Heart left ventricle (tissue), 16 donors: ENCODE measurements at regions of chr6 and their contacts with region 1.

Region 1: DNA sequence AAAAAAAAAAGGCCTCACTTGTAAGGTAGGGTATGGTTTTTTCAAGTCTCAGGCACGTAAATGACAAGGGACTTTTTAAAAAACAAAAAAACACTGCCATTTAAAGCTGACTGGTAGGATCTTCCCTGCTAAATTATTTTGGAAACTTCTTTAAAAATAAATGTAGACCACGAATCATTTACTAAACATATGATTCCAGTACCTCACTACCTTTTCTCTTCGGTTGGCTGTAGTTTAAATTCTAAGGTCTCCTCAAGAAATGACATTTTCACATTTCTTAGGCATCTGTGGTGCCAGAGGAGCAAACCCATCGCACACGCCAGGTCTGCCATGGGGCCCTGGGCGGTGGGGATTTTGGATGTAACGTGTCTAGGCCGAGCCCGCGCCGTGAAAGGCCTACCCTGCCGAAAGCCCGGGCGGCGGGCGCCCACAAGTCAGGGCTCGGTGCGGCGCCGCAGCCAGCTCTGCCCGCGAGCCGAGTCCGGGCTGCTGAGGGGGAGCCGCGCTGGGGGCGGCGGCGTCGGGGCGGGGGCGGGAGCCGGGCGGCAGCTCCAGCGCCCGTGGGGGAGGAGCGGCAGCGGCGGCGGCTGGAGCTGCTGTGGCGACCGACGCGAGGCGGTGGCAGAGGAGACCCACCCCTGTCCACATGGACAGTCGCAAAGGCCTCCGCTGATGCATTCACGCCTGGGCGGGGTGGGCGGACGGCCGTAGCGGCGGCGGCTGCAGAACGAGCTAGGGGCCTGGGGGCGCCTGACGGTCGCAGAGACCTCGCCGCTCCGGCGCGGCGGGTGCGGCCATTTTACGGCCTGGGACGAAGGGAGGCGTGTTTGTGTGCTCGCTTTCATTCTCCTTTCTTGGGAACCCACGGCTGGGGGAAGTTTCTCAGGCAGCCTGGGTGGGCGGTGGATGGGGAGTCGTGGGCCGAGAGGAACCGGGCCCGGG is at the start of gene SENP6:
- DNase-seq: peak; percentile 84 to 92 (median 90)
- ATAC-seq: peak; percentile 75 to 97 (median 92)
- H3K4me3 ChIP-seq: peak within 1 kb of the TSS; percentile 71 to 95 (median 87)
- H3K27ac ChIP-seq: peak within 1 kb of the TSS; percentile 83 to 98 (median 96)
- H3K4me1 ChIP-seq: peaks cover 0 to 46% (median 15%) of the 10 kb centered on the region in 12 donors
- H3K27me3 ChIP-seq: no peaks in the 10 kb centered on the region
- CTCF ChIP-seq: peak in 1 of 12 donors; percentile 5
- POLR2A ChIP-seq: peak in 1 of 2 donors; percentile 74
- total RNA-seq, gene SENP6: 49.9 to 71.5 (median 54.4) TPM

Region 2: DNA sequence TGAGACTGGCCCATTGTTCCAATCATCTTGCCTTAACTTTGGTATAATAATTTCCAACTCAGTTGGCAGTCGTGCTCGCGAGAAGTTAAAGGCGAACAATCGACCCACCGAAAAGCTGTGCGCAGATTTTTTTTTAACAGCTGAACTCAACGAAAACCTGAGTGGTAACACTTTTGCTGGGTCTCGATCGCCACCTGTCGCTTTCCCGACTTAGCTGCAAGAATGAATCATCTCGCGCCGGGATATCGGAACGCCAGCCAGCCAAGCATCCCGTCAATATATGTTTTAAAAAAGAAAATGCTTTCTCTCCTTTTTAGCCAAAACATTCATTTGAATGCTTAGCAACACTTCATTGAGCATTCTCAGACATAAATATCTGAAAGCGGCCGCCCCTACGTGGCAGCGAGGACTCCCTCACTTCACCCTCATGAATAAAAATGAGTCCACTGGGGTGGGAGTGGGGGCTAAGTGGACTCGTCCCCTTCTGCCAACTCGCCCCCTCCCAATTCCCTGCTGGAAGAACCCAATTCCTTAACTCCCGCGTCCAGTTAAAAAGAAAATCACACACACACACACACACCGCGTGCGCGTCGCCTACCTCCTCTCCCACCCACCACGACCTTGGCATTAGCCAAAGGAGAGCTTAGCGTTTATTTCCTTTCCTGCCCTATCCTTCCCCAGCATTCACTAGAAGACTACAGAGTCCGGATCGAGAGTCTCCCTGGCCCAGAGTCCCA is 397.2 kb before region 1 on chr6:
- intact Hi-C with region 1: no loop called
- DNase-seq: peak in 4 of 5 donors; percentile 72 to 83 (median 80)
- ATAC-seq: peak in 2 of 4 donors; percentile 14 to 21
- H3K4me3 ChIP-seq: peak overlapping the region; percentile 19 to 72 (median 58)
- H3K27ac ChIP-seq: peak overlapping the region in 11 of 12 donors; percentile 30 to 87 (median 77)
- H3K4me1 ChIP-seq: peaks cover 0 to 62% (median 20%) of the 10 kb centered on the region in 12 donors
- H3K27me3 ChIP-seq: peaks cover 2 to 84% (median 34%) of the 10 kb centered on the region in 9 donors
- CTCF ChIP-seq: peak; percentile 52 to 84 (median 69)
- POLR2A ChIP-seq: no peak

Region 3: DNA sequence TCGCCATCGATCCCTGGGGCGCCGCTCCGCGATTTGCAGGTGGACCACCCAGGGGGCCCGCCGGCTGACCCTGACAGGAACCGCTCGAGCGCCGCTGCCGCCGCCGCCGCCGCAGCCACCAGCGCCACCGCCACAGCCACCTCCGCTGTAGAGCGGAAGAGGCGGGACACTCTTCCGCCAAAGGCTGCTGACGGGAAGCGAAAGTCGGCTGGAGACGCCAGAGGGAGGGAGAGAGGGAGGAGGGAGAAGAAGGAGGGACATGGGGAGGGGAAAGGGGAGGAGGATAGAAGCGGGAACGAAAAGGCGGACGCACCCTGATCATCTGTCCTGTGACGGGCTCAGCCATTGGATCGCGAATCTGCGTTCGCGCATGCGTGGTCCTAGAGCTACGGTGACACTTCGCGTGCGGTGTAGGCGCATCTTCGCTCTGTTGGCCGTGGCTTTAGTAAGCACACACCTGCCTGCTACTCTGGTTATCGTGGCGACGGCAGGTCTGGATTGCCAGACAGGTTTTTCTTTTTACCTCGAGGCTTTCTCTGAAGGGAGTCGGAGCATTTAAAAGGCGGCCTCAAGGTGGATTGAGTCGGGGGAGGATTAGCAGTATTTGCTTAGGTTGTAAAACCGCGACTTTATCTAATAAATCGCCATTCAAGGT is 316.8 kb before region 1 on chr6 and contains the start of gene TMEM30A:
- intact Hi-C with region 1: loop called in 1 of 10 experiments (anchors 10 kb)
- DNase-seq: peak; percentile 97 to 98 (median 98)
- ATAC-seq: peak; percentile 99 to 100 (median 100)
- H3K4me3 ChIP-seq: peak within 1 kb of the TSS; percentile 59 to 92 (median 84)
- H3K27ac ChIP-seq: peak within 1 kb of the TSS; percentile 70 to 95 (median 90)
- H3K4me1 ChIP-seq: peaks cover 7 to 60% (median 38%) of the 10 kb centered on the region in 12 donors
- H3K27me3 ChIP-seq: no peaks in the 10 kb centered on the region
- CTCF ChIP-seq: peak in 3 of 12 donors; percentile 17 to 38 (median 33)
- POLR2A ChIP-seq: peak in 1 of 2 donors; percentile 86
- total RNA-seq, gene TMEM30A: 30.8 to 86.3 (median 58.2) TPM

Region 4: DNA sequence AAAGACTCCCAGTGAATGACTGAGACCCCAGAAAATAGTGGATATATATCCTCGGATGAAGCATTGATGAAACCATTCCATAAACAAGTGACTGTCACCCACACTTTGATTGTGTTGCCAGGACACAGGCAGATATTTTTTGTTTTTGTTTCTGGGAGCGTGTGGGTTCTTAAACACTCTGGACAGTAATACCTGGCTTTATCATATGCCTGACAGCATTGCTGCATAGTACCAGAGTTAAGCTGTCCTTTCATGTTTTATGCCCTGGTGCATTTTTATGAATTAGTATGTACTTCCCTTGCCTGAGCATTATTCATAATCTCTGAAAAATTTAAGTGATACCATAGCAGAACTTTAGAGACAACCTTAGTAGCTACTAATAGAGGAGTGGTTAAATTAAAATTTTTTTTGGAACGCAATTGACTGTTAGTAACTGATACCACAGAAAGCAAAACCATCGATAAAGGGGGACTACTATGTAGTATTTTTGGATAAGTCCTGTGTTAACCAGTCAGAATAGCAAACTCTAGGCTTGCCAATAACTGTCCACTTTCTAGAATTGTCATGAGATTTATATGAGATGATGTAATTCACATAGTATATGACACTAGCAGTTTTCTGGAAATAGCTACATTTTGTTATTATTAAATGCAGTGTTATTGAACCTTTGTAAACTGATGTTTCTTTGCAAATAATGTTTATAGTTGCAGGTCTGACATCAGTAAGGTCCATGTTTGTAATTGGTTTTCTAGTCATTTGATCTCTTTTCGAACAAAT is 30.5 kb after region 1 on chr6:
- intact Hi-C with region 1: no loop called
- DNase-seq: no peak
- ATAC-seq: peak in 3 of 4 donors; percentile 66 to 73 (median 66)
- H3K4me3 ChIP-seq: no peak overlapping the region
- H3K27ac ChIP-seq: peak overlapping the region in 1 of 12 donors; percentile 32
- H3K4me1 ChIP-seq: peaks cover 0 to 40% (median 15%) of the 10 kb centered on the region in 12 donors
- H3K27me3 ChIP-seq: no peaks in the 10 kb centered on the region
- CTCF ChIP-seq: no peak
- POLR2A ChIP-seq: no peak